Ascending aorta (tissue), 2 donors: ENCODE measurements at regions of chr6 and their contacts with region 1.

Region 1: GRCh38 chr6:1527073-1527457 is 82.7 kb upstream of the FOXC1 start:
- DNase-seq: peak in 1 of 2 donors; percentile 15
- H3K4me3 ChIP-seq: peak overlapping the region in 1 of 2 donors; percentile 40
- H3K27ac ChIP-seq: peak overlapping the region; percentile 33 to 35
- H3K4me1 ChIP-seq: peaks cover 0 to 14% of the 10 kb centered on the region in 2 donors
- H3K27me3 ChIP-seq: no peaks in the 10 kb centered on the region
- CTCF ChIP-seq: no peak

Region 2: GRCh38 chr6:1538810-1539478 is 11.9 kb after region 1 on chr6:
- intact Hi-C with region 1: no loop called
- DNase-seq: no peak
- H3K4me3 ChIP-seq: no peak overlapping the region
- H3K27ac ChIP-seq: no peak overlapping the region
- H3K4me1 ChIP-seq: no peaks in the 10 kb centered on the region
- H3K27me3 ChIP-seq: no peaks in the 10 kb centered on the region
- CTCF ChIP-seq: no peak

Region 3: GRCh38 chr6:1554476-1555310 is 27.6 kb after region 1 on chr6:
- intact Hi-C with region 1: loop called (anchors 2 kb)
- DNase-seq: peak in 1 of 2 donors; percentile 80
- H3K4me3 ChIP-seq: peak overlapping the region; percentile 51 to 76
- H3K27ac ChIP-seq: peak overlapping the region; percentile 69 to 82
- H3K4me1 ChIP-seq: peaks cover 0 to 3% of the 10 kb centered on the region in 2 donors
- H3K27me3 ChIP-seq: no peaks in the 10 kb centered on the region
- CTCF ChIP-seq: peak; percentile 63 to 87 (median 86)

Region 4: GRCh38 chr6:1596088-1596852 is 69.2 kb after region 1 on chr6:
- intact Hi-C with region 1: no loop called
- DNase-seq: no peak
- H3K4me3 ChIP-seq: peak overlapping the region; percentile 27 to 60
- H3K27ac ChIP-seq: no peak overlapping the region
- H3K4me1 ChIP-seq: no peaks in the 10 kb centered on the region
- H3K27me3 ChIP-seq: no peaks in the 10 kb centered on the region
- CTCF ChIP-seq: peak; percentile 92 to 98 (median 97)